ENCODE measurements at regions of chr4 and their contacts with region 1.

Region 1: DNA sequence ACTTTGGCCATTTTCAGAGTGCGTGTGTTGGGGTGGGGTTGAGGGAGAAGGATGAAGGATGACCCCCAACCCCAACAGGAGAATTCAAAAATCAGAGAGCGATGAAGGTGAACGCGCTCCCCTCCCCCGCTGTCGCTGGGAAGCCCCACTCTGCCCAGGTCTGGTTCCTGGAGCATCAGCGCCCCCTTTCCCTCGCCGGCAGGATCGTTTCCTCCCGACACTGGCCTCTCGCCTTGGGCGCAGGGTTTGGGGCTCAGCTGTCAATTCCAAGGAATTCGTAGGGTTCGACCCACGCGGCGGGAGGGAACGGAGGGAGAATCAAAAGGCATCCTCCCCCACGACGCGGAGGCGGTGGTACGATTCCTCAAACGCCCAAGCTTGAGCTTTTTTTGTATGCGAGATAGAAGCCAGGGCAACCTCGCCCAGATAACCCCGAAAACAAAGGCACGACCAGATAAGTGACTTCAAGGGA is 1.0 kb upstream of the PDGFRA start:
- DNase-seq: peak; percentile 79
- H3K4me3 Mint-ChIP-seq: peak overlapping the region; percentile 59
- H3K27ac Mint-ChIP-seq: no peak overlapping the region
- H3K4me1 Mint-ChIP-seq: peaks cover 49% of the 10 kb centered on the region
- H3K27me3 Mint-ChIP-seq: peaks cover 89% of the 10 kb centered on the region

Region 2: DNA sequence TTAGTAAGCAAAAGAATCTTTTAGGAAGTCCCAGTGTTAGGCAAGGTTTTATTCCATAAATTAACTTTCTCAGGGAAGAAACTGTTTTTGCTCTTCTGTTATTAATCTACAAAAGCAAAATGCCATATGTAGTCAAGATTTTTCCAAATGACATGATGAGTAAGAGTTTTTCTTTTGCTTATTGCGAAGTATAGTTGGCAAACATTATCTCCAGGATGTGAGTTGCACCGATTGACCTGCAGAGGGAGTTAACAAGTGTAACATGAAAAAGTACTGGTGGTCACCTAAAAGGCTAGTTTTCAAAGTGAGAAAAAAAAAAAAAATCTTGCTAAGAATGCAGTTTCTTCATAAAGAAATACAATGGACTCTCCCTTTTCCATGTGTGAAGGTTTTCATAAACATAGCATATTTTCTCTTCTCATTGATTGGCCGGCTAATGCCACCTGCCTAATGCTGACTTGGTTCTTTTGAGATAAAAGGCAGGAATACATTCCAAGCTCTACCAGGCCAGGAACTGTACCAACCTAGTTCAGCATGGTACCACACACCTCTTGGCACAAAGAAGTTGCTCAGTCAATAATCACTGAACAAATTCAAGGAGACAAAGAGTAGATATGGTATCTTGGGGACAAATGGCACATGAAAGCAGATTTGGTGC is 737.0 kb before region 1 on chr4:
- CTCF ChIA-PET with region 1: no interaction called
- intact Hi-C with region 1: loop called (anchors 10 kb)
- DNase-seq: no peak
- H3K4me3 Mint-ChIP-seq: no peak overlapping the region
- H3K27ac Mint-ChIP-seq: no peak overlapping the region
- H3K4me1 Mint-ChIP-seq: no peaks in the 10 kb centered on the region
- H3K27me3 Mint-ChIP-seq: peaks cover 11% of the 10 kb centered on the region

Region 3: DNA sequence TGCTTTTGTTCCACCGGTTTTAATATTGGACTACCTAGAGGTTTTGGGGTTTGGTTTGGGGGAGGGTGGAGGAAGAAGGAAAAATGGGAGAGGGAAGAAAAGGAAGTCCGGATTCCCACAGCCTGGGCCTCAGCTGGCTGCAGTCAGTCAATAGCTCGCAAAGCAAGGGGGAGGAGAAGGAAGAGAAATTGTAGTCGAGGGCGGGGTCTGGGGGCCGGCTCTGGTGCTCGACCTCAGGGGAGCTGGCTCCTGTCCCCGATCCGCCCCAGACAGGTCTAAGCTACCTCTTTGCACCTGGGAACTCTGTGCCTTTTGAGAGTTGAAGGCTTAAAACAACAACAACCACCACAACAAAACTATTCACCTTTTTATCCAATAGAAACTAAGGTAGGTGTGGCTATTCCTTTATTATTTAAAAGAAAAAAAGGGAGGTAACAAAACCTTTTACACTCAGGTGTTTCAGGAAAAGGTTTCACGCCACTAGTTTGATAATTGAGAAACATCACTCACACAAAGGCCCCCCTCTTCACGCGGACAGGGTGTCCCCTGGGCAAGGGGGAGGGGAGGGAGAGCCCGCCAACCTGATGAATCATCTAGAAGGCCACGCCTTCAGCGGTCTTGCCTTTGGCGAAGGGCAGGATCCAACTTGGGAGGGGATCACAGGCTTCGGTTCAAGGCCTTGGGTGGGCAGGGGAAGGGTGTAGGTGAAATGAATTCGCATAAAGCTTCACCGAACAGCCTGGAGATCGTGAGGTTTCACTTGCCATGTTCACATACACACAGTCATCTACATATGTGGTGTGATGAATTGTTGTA is 635.2 kb before region 1 on chr4:
- CTCF ChIA-PET with region 1: no interaction called
- intact Hi-C with region 1: loop called (anchors 10 kb)
- DNase-seq: no peak
- H3K4me3 Mint-ChIP-seq: no peak overlapping the region
- H3K27ac Mint-ChIP-seq: no peak overlapping the region
- H3K4me1 Mint-ChIP-seq: peaks cover 12% of the 10 kb centered on the region
- H3K27me3 Mint-ChIP-seq: peaks cover 50% of the 10 kb centered on the region

Region 4: DNA sequence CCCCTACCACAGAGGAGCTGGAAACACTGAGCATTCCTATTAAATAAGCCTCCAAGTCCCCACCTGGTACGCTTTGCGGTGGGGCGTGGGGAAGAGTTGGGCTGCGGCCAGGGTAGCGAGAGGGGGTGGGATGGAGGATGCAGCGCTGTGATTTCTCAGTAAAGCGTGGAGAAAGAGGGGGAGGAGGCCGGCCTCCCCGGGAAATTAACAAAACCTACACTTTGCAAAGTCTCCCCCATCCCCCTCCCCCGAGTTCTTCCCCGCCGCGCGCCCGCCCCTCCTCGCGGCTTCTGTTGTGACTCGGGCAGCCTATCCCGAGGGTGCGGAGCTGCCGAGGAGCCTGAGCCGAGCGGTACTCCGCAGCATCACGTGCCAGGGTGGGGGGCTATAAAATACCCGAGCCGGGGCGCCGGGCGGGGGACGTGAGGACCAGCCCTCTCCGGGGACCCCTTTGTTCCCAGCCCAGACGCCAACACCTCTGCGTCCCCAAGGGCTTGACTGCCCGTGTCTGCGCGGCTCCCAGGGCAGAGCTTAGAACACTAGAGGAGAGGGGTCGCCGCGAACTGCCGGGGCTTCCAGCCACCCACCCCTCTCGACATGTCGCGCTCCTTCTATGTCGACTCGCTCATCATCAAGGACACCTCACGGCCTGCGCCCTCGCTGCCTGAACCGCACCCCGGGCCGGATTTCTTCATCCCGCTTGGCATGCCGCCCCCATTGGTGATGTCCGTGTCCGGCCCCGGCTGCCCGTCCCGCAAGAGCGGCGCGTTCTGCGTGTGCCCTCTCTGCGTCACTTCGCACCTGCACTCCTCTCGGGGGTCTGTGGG is 128.1 kb before region 1 on chr4 and contains the start of gene GSX2:
- CTCF ChIA-PET with region 1: no interaction called
- intact Hi-C with region 1: loop called (anchors 2 kb)
- DNase-seq: peak; percentile 23
- H3K4me3 Mint-ChIP-seq: peak within 1 kb of the TSS; percentile 58
- H3K27ac Mint-ChIP-seq: no peak within 1 kb of the TSS
- H3K4me1 Mint-ChIP-seq: peaks cover 50% of the 10 kb centered on the region
- H3K27me3 Mint-ChIP-seq: peaks cover 85% of the 10 kb centered on the region
- total RNA-seq, gene GSX2: not detected

Measured in activated naive CD4-positive, alpha-beta T cell treated with anti-CD3 and anti-CD28 coated beads for 36 hours (primary cell).